ENCODE measurements at regions of chr5 and their contacts with region 1.

Region 1: DNA sequence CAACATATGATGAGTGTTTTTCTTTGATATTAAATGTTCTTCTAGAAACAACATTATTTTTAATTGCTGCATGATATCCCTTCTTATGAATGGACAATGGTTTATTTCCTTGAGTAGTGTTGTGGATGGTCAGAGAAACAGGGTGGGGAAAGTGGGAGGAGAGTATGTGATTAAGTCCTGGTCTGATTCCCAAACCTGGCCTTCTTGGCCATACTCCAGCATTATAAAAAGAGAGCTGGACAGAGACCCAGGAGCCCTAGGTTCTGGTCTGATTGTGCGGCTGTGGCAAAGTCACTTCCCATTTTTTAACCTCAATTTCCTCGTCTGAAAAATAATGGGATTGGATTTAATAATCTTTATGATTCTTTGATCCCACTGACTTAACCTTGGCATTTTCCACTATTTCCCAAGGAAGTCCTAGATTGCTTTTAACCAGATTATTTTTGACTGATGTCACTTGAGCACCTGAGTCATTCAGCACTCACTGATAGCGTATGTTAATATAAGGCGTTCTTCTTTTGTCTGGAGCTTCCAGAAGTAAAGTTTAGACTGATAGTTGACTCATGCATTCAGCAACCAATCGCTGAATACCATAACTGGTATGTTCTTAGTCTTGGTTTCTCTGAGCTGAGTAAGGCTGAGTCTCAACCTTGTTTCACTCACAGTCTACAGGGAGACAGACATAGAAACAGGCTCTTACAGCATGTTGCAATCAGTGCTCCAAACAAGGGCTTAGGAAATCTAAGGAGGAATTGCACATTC is 26.2 kb downstream of the OSMR start:
- DNase-seq: peak; percentile 99
- ATAC-seq: peak; percentile 97
- H3K4me3 ChIP-seq: no peak overlapping the region
- H3K27ac ChIP-seq: peak overlapping the region; percentile 79
- H3K4me1 ChIP-seq: peaks cover 27% of the 10 kb centered on the region
- H3K27me3 ChIP-seq: no peaks in the 10 kb centered on the region
- CTCF ChIP-seq: no peak

Region 2: DNA sequence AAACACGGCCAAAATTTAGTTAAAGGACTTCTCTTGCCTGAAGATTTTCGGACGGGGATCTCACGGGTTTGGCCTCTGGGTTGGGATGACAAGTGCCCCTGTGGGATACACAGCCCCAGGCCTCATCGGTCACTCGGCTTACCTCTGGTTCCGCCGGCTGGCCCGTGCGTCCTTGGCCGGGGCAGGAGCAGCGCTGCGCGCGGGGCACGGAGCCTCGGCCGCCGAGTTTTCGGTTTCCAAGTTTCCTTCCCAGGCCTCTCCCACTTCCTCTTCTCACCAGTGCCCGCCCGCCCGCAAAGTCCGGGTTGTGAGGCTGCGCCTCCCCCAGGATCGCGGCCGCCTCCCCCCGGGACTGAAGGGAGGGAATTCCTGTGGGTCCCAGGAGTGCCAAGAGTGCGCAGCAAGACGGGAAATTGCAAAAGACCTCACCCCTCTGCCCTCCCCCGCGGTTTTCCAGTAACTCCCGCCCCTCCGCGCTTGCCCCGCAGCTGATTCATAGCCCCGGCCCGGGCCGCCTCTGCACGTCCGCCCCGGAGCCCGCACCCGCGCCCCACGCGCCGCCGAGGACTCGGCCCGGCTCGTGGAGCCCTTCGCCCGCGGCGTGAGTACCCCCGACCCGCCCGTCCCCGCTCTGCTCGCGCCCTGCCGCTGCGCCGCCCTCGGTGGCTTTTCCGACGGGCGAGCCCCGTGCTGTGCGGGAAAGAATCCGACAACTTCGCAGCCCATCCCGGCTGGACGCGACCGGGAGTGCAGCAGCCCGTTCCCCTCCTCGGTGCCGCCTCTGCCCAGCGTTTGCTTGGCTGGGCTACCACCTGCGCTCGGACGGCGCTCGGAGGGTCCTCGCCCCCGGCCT is 26.2 kb before region 1 on chr5 and contains the start of gene OSMR:
- CTCF ChIA-PET with region 1: no interaction called
- POLR2A ChIA-PET with region 1: no interaction called
- intact Hi-C with region 1: loop called (anchors 1 kb)
- DNase-seq: peak; percentile 98
- ATAC-seq: peak; percentile 91
- H3K4me3 ChIP-seq: peak within 1 kb of the TSS; percentile 89
- H3K27ac ChIP-seq: peak within 1 kb of the TSS; percentile 87
- H3K4me1 ChIP-seq: peaks cover 28% of the 10 kb centered on the region
- H3K27me3 ChIP-seq: no peaks in the 10 kb centered on the region
- CTCF ChIP-seq: no peak
- total RNA-seq, gene OSMR: 13.7 and 20.3 TPM in 2 replicates

Region 3: DNA sequence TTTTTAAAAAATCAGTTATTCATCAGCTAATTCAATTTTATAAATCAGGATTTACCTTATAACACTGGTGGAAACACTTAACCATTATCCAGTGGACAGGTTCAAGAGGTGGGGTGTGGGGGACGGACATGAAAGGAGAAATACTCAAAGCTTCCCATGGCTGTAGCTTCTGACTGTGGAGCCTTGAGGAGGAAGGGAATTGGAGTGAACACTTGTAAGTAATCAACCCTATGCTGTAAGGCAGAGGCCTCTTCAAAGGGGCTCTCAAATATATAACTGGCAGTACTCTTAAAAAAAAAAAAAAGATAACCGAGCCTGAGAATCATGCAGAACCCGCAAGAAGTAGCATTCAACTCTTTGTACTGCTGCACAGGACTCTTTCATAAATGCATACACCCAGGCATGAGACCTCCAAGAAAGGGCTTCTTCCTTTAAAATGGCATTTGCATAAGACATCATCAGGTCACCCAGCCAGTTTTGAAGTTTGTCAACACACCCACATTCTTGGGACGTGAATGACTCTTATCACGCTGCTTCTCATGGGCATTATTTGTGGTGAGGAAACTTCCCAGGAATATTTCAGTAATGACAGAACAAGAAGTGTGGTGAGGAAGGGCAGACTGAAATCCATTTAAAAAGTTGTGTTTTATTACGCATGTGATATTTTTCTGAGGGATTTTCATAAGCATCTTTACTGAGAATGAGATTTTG is 18.1 kb before region 1 on chr5:
- CTCF ChIA-PET with region 1: no interaction called
- POLR2A ChIA-PET with region 1: no interaction called
- intact Hi-C with region 1: loop called (anchors 2 kb)
- DNase-seq: peak; percentile 98
- ATAC-seq: peak; percentile 95
- H3K4me3 ChIP-seq: peak overlapping the region; percentile 4; the same call in 1 of the 2 replicates
- H3K27ac ChIP-seq: peak overlapping the region; percentile 60
- H3K4me1 ChIP-seq: peaks cover 31% of the 10 kb centered on the region
- H3K27me3 ChIP-seq: no peaks in the 10 kb centered on the region
- CTCF ChIP-seq: no peak

Region 4: DNA sequence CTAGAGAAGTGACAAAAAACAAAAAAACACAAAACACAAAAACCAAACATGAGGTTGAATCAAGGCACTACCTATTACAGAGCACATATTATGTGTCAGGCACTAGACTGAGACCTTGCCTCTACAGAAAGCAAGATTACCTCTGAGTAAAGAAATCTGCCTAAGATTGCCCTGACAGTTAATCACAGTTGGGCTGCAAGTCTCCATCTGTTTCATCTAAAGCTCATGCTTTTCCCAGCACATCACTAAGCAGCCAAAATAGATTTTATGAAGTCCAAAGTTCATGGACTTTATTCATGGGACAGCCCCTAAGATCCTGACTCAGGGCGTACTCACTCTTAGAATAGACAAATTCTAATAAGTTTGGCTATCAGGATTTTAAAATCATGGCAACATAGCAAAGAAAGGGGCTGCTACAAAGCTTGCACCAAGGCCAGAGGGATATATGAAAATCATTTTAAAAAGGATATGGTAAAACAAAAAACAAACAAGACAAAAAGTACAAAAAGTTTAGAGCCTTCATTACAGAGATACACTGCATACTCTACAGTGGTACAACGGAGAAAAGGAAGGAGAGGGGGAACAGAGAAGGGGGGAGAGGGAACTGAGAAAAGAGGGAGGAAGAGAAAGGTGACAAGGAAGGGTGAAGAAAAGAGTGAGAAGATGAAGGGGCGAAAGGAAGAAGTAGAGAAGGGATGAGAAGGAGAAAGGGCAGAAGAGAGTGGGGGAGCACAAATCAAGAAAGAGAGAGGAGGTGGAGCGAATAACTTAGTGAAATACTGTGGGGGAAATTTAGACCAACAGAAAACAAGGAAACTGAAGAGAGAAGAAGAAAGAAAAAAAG is 144.0 kb after region 1 on chr5:
- CTCF ChIA-PET with region 1: no interaction called
- POLR2A ChIA-PET with region 1: no interaction called
- intact Hi-C with region 1: no loop called
- DNase-seq: peak; percentile 85
- ATAC-seq: peak; percentile 96
- H3K4me3 ChIP-seq: peak overlapping the region; percentile 16; the same call in 1 of the 2 replicates
- H3K27ac ChIP-seq: peak overlapping the region; percentile 53
- H3K4me1 ChIP-seq: peaks cover 21% of the 10 kb centered on the region
- H3K27me3 ChIP-seq: no peaks in the 10 kb centered on the region
- CTCF ChIP-seq: no peak

Measured in PC-3 (cell line).